Ascending aorta (tissue), 2 donors: ENCODE measurements at regions of chr7 and their contacts with region 1.

Region 1: GRCh38 chr7:76314042-76314721 is 11.7 kb downstream of the HSPB1 start:
- DNase-seq: peak; percentile 82 to 99
- H3K4me3 ChIP-seq: no peak overlapping the region
- H3K27ac ChIP-seq: peak overlapping the region in 1 of 2 donors; percentile 43
- H3K4me1 ChIP-seq: peaks cover 7 to 12% of the 10 kb centered on the region in 2 donors
- H3K27me3 ChIP-seq: no peaks in the 10 kb centered on the region
- CTCF ChIP-seq: peak; percentile 100

Region 2: GRCh38 chr7:76047811-76048667 is 266.1 kb before region 1 on chr7 and contains the starts of genes MDH2 and STYXL1:
- intact Hi-C with region 1: loop called (anchors 10 kb)
- DNase-seq: peak; percentile 88 to 98
- H3K4me3 ChIP-seq: peak within 1 kb of the TSS; percentile 93 to 99
- H3K27ac ChIP-seq: peak within 1 kb of the TSS; percentile 84 to 96
- H3K4me1 ChIP-seq: peaks cover 0 to 19% of the 10 kb centered on the region in 2 donors
- H3K27me3 ChIP-seq: no peaks in the 10 kb centered on the region
- CTCF ChIP-seq: no peak
- total RNA-seq, gene MDH2: 63.5 TPM
- total RNA-seq, gene STYXL1: 0.96 TPM

Region 3: GRCh38 chr7:76282344-76283253 is 31.6 kb before region 1 on chr7:
- intact Hi-C with region 1: loop called (anchors 5 kb)
- DNase-seq: no peak
- H3K4me3 ChIP-seq: peak overlapping the region; percentile 66 to 70
- H3K27ac ChIP-seq: no peak overlapping the region
- H3K4me1 ChIP-seq: peaks cover 0 to 5% of the 10 kb centered on the region in 2 donors
- H3K27me3 ChIP-seq: no peaks in the 10 kb centered on the region
- CTCF ChIP-seq: no peak

Region 4: DNA sequence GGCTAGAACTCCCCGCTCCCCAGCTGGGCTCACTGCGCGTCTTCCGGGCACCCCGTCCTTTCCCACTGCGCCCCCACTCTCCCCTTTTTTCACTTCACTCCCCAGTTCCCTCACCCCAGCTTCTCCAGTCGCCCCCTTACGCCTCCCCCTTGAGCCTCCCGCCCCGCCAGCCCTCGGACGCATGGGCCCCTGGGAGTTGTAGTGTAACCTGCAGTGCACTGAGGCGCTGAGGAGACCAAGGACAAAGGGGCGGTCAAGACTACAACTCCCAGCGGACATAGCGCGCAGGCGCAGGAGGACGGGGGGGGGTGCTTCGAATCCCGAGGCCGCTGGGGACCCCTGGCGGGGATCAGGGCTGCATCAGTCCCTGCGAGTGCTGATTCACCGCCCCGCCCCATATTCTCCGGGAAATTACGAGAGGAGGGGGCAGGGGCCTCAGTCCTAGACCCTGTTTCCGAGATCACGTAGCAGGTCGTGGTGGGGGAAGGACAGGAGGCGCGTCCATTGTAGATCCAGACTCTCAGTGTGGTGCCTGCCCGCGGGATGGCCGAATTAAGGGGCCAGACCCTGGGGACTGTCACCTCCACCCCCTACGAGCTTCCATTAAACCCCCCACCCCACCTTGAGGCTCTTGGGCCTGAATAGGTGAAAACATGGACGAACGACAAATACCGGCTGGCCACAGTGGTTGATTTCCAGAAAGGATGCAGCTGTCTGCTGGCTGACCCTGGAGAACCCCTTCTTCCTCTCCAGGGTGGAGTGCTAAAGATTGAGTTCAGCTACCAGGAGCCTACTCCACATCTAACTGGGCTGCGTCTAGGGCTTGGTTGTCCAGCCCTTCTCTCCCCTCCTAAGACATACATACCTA is 45.2 kb after region 1 on chr7:
- intact Hi-C with region 1: loop called (anchors 1 kb)
- DNase-seq: peak; percentile 93 to 98
- H3K4me3 ChIP-seq: peak overlapping the region; percentile 81 to 95
- H3K27ac ChIP-seq: peak overlapping the region; percentile 98 to 99
- H3K4me1 ChIP-seq: peaks cover 4 to 28% of the 10 kb centered on the region in 2 donors
- H3K27me3 ChIP-seq: no peaks in the 10 kb centered on the region
- CTCF ChIP-seq: peak; percentile 64 to 78 (median 72)

Region 5: DNA sequence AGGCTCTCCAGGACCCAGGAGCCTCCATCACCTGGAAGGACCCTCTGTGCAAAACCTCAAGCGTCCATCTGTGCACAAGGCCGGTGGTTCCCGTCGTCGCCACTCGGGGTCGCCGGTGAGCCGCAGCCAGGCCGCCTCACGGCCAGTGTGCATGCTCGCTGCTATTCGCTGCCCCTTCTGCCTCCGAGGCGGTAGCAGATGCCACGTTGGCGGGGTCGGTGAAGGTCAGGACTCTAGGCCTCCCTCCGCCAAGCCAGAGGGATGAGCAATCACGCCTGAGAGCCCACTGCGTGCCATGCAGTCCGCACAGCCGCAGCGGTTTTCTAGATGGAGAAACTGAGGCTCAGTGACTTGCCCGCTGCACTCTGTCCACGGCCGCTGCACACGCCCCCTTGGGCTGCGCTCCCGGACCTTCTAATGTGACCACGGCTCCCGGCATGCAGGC is 201.8 kb after region 1 on chr7:
- intact Hi-C with region 1: no loop called
- DNase-seq: no peak
- H3K4me3 ChIP-seq: no peak overlapping the region
- H3K27ac ChIP-seq: no peak overlapping the region
- H3K4me1 ChIP-seq: no peaks in the 10 kb centered on the region
- H3K27me3 ChIP-seq: no peaks in the 10 kb centered on the region
- CTCF ChIP-seq: peak in 1 of 3 experiments; percentile 74